ENCODE measurements at regions of chr12 and their contacts with region 1.

Region 1: DNA sequence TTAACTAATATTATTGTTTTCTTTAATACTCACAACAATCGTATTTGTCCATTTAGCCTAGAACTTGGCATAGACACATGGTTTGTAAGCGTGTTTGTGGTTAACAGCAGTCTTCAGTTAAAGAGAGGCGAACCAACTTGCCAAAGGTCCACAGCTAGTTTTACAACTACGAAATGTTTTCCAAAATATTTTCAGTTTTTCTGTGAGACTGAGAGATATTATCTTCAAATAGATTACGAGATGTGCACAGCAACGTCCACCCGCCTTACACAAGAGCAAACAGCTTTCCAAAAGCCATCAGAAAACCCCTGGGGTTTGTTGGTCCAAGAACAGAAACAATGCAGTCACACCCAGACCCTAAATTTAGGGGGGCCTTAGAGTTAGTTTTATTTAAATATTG is 58.6 kb upstream of the RASSF3 start:
- DNase-seq: no peak
- ATAC-seq: no peak

Region 2: DNA sequence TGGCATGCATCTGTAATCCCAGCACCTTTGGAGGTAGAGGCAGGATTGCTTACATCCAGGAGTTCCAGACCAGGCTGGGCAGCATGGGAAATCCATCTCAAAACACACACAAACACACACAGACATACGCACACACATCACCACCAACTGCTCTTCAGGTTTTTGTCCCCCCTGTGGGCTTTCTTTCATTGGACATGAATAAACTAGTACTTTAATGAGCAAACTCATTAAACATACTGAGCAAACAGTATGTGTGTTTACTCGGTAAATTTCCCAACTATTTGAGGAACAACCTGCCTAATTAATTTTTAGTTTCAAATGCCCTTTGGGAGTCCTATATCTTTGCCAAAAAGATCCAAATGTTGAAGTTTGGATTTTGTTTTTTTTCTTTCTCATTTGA is 48.5 kb after region 1 on chr12:
- intact Hi-C with region 1: loop called in 1 of 2 experiments (anchors 5 kb)
- DNase-seq: no peak
- ATAC-seq: no peak

Region 3: DNA sequence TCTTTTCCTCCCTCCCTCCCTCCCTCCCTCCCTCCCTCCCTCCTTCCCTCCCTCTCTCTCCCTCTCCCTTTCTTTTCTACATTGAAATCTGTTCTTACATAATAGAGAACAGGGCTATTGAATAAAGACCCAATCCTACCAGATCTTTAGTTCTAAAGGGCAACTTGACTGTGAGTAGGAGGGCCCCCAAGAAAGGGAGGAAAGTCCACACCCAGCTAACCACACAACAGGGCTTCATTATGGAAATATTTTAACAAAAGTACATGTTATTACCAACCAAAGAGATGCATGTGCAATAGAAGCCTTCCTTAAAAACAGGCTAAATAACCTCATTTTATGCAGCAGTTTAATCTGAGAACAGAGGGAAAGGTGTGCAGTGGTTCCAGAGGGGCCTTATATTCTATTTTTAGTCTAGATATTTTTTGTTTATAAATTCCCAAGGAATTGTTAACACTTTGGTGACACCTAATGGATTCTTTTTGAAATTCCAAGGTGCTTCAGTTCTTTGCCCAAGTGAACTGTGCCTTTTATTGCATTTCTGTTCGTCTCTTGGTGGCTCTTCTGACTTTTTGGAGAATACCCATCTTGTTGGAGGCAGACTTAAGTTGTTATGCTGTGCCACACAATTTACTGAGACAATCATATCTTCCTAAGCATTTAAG is 144.5 kb after region 1 on chr12:
- intact Hi-C with region 1: loop called (anchors 1 to 5 kb)
- DNase-seq: no peak
- ATAC-seq: no peak

Region 4: DNA sequence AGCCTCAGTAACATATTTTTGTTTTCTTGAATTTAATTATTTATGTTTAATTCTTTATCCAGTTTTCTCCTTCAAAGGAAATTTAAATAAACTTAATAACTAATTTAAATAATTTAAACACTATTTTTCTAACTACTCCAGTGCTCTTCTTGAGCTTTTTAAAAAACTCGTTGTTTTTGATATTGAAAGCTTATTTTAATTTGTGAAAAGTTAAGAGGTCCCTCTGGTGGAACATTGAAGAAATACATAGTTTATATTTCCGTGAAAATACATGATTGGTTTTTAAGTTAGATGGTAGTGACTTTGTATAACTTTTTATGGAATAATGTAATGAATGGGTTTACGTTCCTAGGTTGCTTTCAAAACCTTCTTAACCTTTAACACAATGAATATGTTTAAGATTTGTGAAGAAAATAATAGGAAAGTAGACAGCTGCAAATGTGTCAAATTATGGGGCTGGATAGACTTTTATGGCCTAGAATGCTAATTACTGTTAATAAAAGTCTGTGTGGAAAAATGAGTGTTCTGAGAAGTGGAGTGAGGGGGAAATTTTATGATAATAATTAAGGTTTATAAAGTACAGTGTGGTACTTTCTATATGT is 680.9 kb after region 1 on chr12:
- intact Hi-C with region 1: no loop called
- DNase-seq: no peak
- ATAC-seq: no peak